Caco-2 (cell line): ENCODE measurements at regions of chr7 and their contacts with region 1.

Region 1: GRCh38 chr7:48154792-48155413 is 16.4 kb upstream of the ABCA13 start:
- DNase-seq: peak; percentile 48 to 70
- H3K4me3 ChIP-seq: no peak overlapping the region
- H3K4me3 Mint-ChIP-seq: no peak overlapping the region
- H3K27ac Mint-ChIP-seq: no peak overlapping the region
- H3K4me1 ChIP-seq: no peaks in the 10 kb centered on the region
- H3K4me1 Mint-ChIP-seq: peaks cover 6% of the 10 kb centered on the region
- H3K27me3 ChIP-seq: no peaks in the 10 kb centered on the region
- H3K27me3 Mint-ChIP-seq: peaks cover 17% of the 10 kb centered on the region
- CTCF ChIP-seq: peak; percentile 68 to 81

Region 2: DNA sequence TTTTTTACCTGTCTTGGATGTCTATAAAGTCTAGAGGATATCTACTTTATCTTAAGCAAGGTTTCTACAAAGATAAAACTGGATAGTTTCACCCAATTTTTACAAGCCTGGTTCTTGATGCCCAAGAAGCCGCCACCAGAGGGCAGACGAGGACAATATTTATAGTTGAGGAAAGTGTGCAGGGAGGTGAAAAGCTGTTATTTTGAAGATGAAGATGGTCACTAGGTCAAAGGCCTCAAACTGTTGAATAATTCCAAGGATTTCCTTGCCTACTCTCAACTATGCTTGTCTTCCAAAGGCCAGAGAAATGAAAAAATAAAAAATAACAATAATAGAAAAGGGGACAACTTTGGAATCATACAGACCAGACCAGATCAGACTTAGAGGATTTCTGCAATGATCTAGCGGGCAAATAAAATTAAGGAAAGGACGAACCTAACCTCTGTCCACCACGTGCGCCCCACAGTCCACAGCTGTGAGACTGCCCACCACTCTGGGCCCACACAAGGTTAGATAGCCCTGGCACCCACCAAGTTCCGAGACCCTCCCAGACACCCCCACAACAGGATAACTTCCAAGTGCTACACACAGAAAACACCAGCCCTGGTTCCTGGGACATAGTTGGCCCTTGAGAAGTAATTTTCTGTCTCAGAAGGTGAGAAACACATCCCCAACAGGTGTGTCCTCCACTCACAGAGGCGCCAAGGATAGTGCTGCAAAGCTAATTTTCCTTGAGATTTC is 209.5 kb before region 1 on chr7:
- CTCF ChIA-PET with region 1: interaction called, 15 read pairs
- POLR2A ChIA-PET with region 1: no interaction called
- intact Hi-C with region 1: loop called (anchors 1 kb)
- DNase-seq: peak; percentile 67 to 78
- H3K4me3 ChIP-seq: no peak overlapping the region
- H3K4me3 Mint-ChIP-seq: no peak overlapping the region
- H3K27ac Mint-ChIP-seq: no peak overlapping the region
- H3K4me1 ChIP-seq: peaks cover 15% of the 10 kb centered on the region
- H3K4me1 Mint-ChIP-seq: peaks cover 30% of the 10 kb centered on the region
- H3K27me3 ChIP-seq: no peaks in the 10 kb centered on the region
- H3K27me3 Mint-ChIP-seq: no peaks in the 10 kb centered on the region
- CTCF ChIP-seq: peak; percentile 74 to 77

Region 3: GRCh38 chr7:48140001-48140681 is 14.8 kb before region 1 on chr7:
- CTCF ChIA-PET with region 1: interaction called, 5 read pairs
- POLR2A ChIA-PET with region 1: no interaction called
- intact Hi-C with region 1: loop called (anchors 1 kb)
- DNase-seq: peak; percentile 71 to 77
- H3K4me3 ChIP-seq: no peak overlapping the region
- H3K4me3 Mint-ChIP-seq: no peak overlapping the region
- H3K27ac Mint-ChIP-seq: peak overlapping the region; percentile 39
- H3K4me1 ChIP-seq: peaks cover 26% of the 10 kb centered on the region
- H3K4me1 Mint-ChIP-seq: peaks cover 27% of the 10 kb centered on the region
- H3K27me3 ChIP-seq: no peaks in the 10 kb centered on the region
- H3K27me3 Mint-ChIP-seq: no peaks in the 10 kb centered on the region
- CTCF ChIP-seq: no peak